ENCODE measurements at regions of chr3 and their contacts with region 1.

Region 1: DNA sequence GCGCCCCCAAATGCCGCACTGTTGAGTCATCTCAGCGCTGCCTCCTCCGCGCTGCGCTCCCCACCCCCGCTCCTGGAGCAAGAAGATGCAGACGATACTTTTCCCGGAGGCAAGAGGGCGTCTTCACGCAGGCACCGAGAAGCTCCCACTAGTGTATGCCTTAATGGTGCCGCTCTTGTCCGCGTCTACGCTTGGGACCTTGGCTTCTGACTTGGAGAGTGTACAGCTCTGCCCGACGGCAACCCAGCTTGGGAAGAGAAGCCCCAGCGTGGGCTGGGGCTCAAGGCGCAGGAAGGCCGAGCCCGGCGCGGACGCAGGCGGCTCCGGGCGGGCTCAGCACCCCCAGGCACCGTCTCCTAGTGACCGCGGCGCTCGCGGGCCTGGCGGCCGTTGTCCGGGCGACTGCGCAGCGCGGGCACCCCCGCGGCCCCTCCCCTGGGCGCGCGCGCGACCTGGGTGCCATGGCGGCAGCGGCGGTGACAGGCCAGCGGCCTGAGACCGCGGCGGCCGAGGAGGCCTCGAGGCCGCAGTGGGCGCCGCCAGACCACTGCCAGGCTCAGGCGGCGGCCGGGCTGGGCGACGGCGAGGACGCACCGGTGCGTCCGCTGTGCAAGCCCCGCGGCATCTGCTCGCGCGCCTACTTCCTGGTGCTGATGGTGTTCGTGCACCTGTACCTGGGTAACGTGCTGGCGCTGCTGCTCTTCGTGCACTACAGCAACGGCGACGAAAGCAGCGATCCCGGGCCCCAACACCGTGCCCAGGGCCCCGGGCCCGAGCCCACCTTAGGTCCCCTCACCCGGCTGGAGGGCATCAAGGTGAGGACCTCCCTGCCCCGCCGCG is at the start of gene P4HTM:
- DNase-seq: peak; percentile 57
- H3K4me3 ChIP-seq: peak within 1 kb of the TSS; percentile 82
- CTCF ChIP-seq: peak; percentile 66

Region 2: DNA sequence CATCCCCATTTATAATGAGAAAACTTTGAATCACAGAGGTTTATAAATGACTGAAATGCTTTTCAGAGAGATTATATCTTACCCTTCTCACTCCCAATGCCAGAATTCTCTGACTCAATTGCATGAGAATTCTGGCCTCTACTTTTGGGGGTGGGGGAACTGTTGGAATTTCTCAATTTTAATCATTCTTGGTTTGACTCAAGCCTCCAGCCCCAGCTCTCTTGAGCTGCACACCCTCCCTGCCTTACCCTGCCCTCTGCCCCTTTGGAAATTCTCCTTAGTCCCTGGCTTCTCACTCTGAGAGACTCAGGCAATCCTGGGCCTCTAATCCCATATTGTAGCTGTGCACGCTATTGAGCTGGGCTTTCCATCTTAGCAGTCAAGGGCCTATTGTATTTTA is 704.9 kb before region 1 on chr3:
- CTCF ChIA-PET with region 1: no interaction called
- POLR2A ChIA-PET with region 1: no interaction called
- DNase-seq: peak; percentile 21
- H3K4me3 ChIP-seq: no peak overlapping the region
- CTCF ChIP-seq: no peak

Region 3: GRCh38 chr3:48974076-48974864 is 15.7 kb before region 1 on chr3:
- CTCF ChIA-PET with region 1: interaction called, 38 read pairs
- POLR2A ChIA-PET with region 1: no interaction called
- DNase-seq: no peak
- H3K4me3 ChIP-seq: no peak overlapping the region
- CTCF ChIP-seq: no peak

Region 4: GRCh38 chr3:49007068-49007770 is 17.2 kb after region 1 on chr3 and contains the start of gene WDR6:
- CTCF ChIA-PET with region 1: interaction called, 50 read pairs
- POLR2A ChIA-PET with region 1: interaction called, 33 read pairs
- DNase-seq: peak; percentile 83
- H3K4me3 ChIP-seq: peak within 1 kb of the TSS; percentile 97
- CTCF ChIP-seq: peak; percentile 44

Region 5: GRCh38 chr3:49013755-49014628 is 24.0 kb after region 1 on chr3:
- CTCF ChIA-PET with region 1: interaction called, 64 read pairs
- POLR2A ChIA-PET with region 1: interaction called, 4 read pairs
- DNase-seq: no peak
- H3K4me3 ChIP-seq: no peak overlapping the region
- CTCF ChIP-seq: peak; percentile 70

Region 6: DNA sequence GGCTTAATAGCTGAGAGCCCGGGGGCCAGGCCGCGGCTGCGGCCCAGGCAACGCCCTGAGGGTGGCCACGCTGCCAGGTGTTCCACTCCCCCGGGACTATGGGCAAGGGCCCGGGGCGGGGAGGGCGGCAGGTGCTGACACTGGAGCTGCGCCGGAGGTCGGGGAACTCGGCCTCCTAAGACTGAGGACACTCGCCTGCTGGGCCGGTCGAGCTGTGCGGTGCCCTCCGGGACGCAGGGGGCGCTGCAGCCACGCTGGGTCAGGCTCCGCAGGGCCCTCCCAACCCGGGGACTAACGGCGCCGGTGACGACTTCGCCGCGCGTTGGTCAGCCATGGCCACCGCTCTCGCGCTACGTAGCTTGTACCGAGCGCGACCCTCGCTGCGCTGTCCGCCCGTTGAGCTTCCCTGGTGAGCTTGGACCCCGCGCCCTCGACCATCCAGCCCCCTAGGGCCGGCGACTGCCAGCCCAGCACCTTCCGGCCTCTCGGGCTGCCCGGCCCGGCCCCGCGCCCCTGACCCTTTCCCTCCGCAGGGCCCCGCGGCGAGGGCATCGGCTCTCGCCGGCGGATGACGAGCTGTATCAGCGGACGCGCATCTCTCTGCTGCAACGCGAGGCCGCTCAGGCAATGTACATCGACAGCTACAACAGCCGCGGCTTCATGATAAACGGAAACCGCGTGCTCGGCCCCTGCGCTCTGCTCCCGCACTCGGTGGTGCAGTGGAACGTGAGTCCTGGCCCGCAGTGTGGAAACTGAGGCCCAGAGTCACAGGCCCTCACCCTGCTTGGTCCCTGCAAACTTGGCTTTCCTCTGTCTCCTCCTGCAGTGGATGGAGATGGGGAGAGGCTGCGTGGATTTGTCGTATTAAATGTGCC is 32.0 kb after region 1 on chr3 and contains the start of gene NDUFAF3:
- CTCF ChIA-PET with region 1: interaction called, 64 read pairs
- POLR2A ChIA-PET with region 1: interaction called, 43 read pairs
- DNase-seq: no peak
- H3K4me3 ChIP-seq: peak within 1 kb of the TSS; percentile 94
- CTCF ChIP-seq: peak; percentile 99